MCF 10A (cell line): ENCODE measurements at regions of chr1 and their contacts with region 1.

Region 1: GRCh38 chr1:151165738-151166505 is at the starts of genes LYSMD1 and SCNM1:
- DNase-seq: peak; percentile 100
- H3K4me3 Mint-ChIP-seq: peak within 1 kb of the TSS; percentile 87
- H3K27ac Mint-ChIP-seq: peak within 1 kb of the TSS; percentile 97
- H3K4me1 Mint-ChIP-seq: peaks cover 25% of the 10 kb centered on the region
- H3K27me3 Mint-ChIP-seq: no peaks in the 10 kb centered on the region
- CTCF ChIP-seq: no peak
- total RNA-seq, gene LYSMD1: 14.4 and 22.3 TPM in 2 replicates
- total RNA-seq, gene SCNM1: 88.5 and 93.0 TPM in 2 replicates

Region 2: DNA sequence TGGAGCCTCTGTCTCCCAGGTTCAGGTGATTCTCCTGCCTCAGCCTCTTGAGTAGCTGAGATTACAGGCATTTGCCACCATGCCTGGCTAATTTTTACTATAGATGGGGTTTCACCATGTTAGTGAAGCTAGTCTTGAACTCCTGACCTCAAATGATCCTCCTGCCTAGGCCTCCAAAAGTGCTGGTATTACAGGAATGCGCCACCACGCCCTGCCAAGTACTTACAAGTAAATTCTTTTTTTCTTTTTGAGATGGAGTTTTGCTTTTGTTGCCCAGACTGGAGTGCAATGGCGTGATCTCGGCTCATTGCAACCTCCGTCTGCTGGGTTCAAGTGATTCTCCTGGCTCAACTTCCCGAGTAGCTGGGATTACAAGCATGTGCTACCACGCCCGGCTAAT is 759.4 kb before region 1 on chr1:
- CTCF ChIA-PET with region 1: no interaction called
- POLR2A ChIA-PET with region 1: no interaction called
- intact Hi-C with region 1: no loop called
- DNase-seq: no peak
- H3K4me3 Mint-ChIP-seq: no peak overlapping the region
- H3K27ac Mint-ChIP-seq: no peak overlapping the region
- H3K4me1 Mint-ChIP-seq: peaks cover 37% of the 10 kb centered on the region
- H3K27me3 Mint-ChIP-seq: no peaks in the 10 kb centered on the region
- CTCF ChIP-seq: no peak

Region 3: GRCh38 chr1:151047925-151048645 is 117.8 kb before region 1 on chr1:
- CTCF ChIA-PET with region 1: interaction called, 3 read pairs
- POLR2A ChIA-PET with region 1: interaction called, 18 read pairs
- intact Hi-C with region 1: no loop called
- DNase-seq: peak; percentile 79
- H3K4me3 Mint-ChIP-seq: peak overlapping the region; percentile 85
- H3K27ac Mint-ChIP-seq: peak overlapping the region; percentile 79
- H3K4me1 Mint-ChIP-seq: peaks cover 21% of the 10 kb centered on the region
- H3K27me3 Mint-ChIP-seq: no peaks in the 10 kb centered on the region
- CTCF ChIP-seq: peak; percentile 36

Region 4: GRCh38 chr1:151070474-151071276 is 95.2 kb before region 1 on chr1 and contains the start of gene GABPB2:
- CTCF ChIA-PET with region 1: interaction called, 6 read pairs
- POLR2A ChIA-PET with region 1: interaction called, 11 read pairs
- intact Hi-C with region 1: no loop called
- DNase-seq: peak; percentile 98
- H3K4me3 Mint-ChIP-seq: peak within 1 kb of the TSS; percentile 100
- H3K27ac Mint-ChIP-seq: peak within 1 kb of the TSS; percentile 100
- H3K4me1 Mint-ChIP-seq: no peaks in the 10 kb centered on the region
- H3K27me3 Mint-ChIP-seq: no peaks in the 10 kb centered on the region
- CTCF ChIP-seq: peak; percentile 99
- total RNA-seq, gene GABPB2: 20.2 and 22.9 TPM in 2 replicates

Region 5: DNA sequence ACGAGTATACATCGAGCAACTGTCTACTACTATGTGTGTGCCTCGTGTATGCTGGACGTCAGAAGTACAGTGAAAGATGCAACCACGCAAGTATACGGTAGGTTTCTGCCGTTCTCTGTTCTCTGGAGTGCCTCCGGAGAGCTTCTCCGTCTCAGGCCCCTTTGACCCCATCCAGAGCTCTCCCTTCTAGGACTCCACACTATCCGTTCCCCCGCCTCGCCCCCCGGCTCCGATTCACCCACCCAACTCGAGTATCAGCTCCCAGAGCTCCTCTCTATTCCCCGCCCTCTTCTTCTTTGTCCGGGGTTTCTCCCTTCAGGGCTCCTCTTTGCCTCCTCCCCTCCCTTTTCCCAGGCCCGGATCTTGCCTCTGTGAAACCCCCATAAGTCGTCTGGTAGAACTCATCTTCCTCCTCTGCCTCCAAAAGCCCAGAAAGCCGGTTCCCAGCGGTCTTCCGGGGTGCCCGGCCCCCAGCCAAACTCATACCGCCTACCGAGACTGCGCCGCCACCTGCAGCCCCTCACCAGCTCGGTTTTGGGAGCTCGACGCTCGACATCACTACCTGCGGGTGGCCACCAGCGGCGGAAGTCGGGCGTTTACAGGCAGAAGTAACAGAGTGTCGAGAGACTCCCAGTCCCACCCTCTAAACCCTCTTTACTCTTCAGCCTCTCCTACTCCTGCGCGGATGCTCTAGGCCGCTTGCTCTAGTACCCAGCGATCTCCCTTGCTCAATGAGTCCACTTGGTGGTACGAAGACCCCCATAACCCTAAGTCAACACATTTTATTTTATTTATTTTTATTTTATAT is 23.9 kb after region 1 on chr1 and contains the start of gene VPS72:
- CTCF ChIA-PET with region 1: interaction called, 12 read pairs
- POLR2A ChIA-PET with region 1: interaction called, 91 read pairs
- intact Hi-C with region 1: no loop called
- DNase-seq: peak; percentile 93
- H3K4me3 Mint-ChIP-seq: peak within 1 kb of the TSS; percentile 83
- H3K27ac Mint-ChIP-seq: peak within 1 kb of the TSS; percentile 90
- H3K4me1 Mint-ChIP-seq: peaks cover 33% of the 10 kb centered on the region
- H3K27me3 Mint-ChIP-seq: no peaks in the 10 kb centered on the region
- CTCF ChIP-seq: no peak
- total RNA-seq, gene VPS72: 106 and 108 TPM in 2 replicates

Region 6: DNA sequence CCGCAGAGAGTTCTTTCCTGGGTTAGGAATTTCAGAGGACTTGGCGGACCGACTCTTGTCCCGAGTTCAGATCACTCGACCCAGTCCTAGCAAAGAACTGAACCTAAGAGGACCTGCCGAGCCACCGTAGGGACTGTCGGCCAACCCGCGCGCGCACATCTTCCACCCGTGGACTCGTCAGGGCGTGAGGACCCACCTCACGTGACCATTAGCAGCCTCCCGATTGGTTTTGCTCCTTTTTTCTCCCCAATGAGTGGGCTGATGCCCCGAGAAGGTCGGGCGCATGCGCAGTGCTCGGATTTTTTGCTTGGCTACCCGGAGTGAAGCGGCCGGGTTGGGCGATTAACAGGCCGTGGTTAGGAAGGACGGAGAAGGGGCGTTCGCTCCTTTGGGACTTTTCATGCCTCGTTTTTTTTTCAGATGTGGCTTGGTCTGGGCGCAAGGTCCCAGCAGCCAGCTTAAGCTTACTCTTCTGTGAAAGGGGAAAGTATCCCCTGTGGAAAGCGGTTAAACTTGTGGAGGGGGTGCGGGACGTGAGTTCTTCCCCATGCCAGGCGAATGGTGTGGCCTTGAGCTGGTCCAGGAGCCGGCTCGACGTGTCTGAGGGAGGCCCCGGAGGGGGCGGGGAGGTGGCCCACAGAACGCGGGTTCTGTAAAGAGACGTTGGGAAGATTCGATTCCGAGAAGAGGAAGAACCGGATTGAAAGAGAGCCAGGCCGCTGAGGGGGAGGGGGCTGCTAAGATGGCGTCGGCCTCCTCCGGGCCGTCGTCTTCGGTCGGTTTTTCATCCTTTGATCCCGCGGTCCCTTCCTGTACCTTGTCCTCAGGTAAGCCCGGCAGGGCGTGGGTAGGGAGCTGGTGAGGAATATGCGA is 32.6 kb after region 1 on chr1 and contains the start of gene PIP5K1A:
- CTCF ChIA-PET with region 1: interaction called, 4 read pairs
- POLR2A ChIA-PET with region 1: interaction called, 27 read pairs
- intact Hi-C with region 1: no loop called
- DNase-seq: peak; percentile 100
- H3K4me3 Mint-ChIP-seq: peak within 1 kb of the TSS; percentile 93
- H3K27ac Mint-ChIP-seq: peak within 1 kb of the TSS; percentile 95
- H3K4me1 Mint-ChIP-seq: peaks cover 40% of the 10 kb centered on the region
- H3K27me3 Mint-ChIP-seq: no peaks in the 10 kb centered on the region
- CTCF ChIP-seq: no peak
- total RNA-seq, gene PIP5K1A: 150 and 163 TPM in 2 replicates